PC-9 (cell line): ENCODE measurements at regions of chr7 and their contacts with region 1.

Region 1: GRCh38 chr7:41705109-41705901 is 2.4 kb upstream of the INHBA start:
- DNase-seq: peak; percentile 80 to 96
- H3K4me3 ChIP-seq: peak overlapping the region; percentile 54; the same call in 1 of the 2 replicates
- H3K27ac ChIP-seq: peak overlapping the region; percentile 53; the same call in 1 of the 2 replicates
- H3K4me1 ChIP-seq: peaks cover 43% of the 10 kb centered on the region
- H3K27me3 ChIP-seq: no peaks in the 10 kb centered on the region
- CTCF ChIP-seq: peak; percentile 97

Region 2: GRCh38 chr7:40232242-40232893 is 1472.9 kb before region 1 on chr7:
- CTCF ChIA-PET with region 1: interaction called, 5 read pairs
- POLR2A ChIA-PET with region 1: no interaction called
- intact Hi-C with region 1: loop called (anchors 10 kb)
- DNase-seq: peak; percentile 28 to 48
- H3K4me3 ChIP-seq: no peak overlapping the region
- H3K27ac ChIP-seq: no peak overlapping the region
- H3K4me1 ChIP-seq: no peaks in the 10 kb centered on the region
- H3K27me3 ChIP-seq: no peaks in the 10 kb centered on the region
- CTCF ChIP-seq: peak; percentile 84

Region 3: DNA sequence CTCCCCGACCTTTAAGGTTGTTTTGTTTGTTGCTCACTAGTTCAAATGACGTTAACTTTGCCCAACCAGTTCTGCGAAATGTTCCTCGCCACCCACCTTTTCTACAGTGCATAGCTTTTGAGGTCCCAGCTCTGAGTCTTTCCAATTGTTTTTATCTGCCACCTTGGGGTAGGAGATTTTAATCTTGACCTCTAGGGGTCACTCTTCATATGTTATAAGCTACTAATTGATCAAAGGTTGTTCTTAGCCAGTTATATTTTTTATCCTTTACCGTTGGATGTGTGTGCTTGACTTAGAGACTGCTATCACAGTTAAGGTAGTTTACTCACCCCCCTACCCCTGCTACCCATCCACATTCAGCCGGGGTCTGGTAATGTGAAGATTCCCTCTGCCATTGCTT is 1198.1 kb before region 1 on chr7:
- CTCF ChIA-PET with region 1: interaction called, 11 read pairs
- POLR2A ChIA-PET with region 1: no interaction called
- intact Hi-C with region 1: no loop called
- DNase-seq: no peak
- H3K4me3 ChIP-seq: no peak overlapping the region
- H3K27ac ChIP-seq: no peak overlapping the region
- H3K4me1 ChIP-seq: no peaks in the 10 kb centered on the region
- H3K27me3 ChIP-seq: no peaks in the 10 kb centered on the region
- CTCF ChIP-seq: peak; percentile 42; the same call in 1 of the 2 replicates

Region 4: GRCh38 chr7:40899651-40900507 is 805.4 kb before region 1 on chr7:
- CTCF ChIA-PET with region 1: interaction called, 4 read pairs
- POLR2A ChIA-PET with region 1: no interaction called
- intact Hi-C with region 1: loop called (anchors 1 kb)
- DNase-seq: peak; percentile 48 to 89
- H3K4me3 ChIP-seq: peak overlapping the region; percentile 51
- H3K27ac ChIP-seq: peak overlapping the region; percentile 94
- H3K4me1 ChIP-seq: peaks cover 25% of the 10 kb centered on the region
- H3K27me3 ChIP-seq: no peaks in the 10 kb centered on the region
- CTCF ChIP-seq: no peak

Region 5: DNA sequence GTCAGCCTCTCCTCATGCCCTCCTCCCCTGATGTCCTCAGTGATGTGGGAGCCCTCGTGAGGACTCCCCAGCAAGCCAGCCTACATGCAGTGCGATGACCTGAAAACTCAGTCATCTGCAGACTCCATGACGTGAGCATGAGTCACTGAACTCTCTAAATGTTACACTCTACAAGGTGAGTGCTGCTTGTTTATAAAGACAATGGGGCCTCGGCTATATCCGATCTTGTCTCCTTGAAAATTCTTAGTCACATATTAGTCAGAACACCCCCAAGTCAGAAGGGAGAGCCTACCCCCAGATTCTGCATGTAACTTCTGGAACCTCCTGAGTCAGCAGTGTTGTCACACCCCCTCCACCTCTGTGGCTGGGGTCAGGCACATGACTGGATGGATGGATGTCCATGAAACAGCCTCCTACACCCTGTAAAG is 676.2 kb before region 1 on chr7:
- CTCF ChIA-PET with region 1: no interaction called
- POLR2A ChIA-PET with region 1: interaction called, 4 read pairs
- intact Hi-C with region 1: loop called (anchors 1 kb)
- DNase-seq: peak; percentile 74 to 84
- H3K4me3 ChIP-seq: no peak overlapping the region
- H3K27ac ChIP-seq: peak overlapping the region; percentile 39
- H3K4me1 ChIP-seq: peaks cover 22% of the 10 kb centered on the region
- H3K27me3 ChIP-seq: no peaks in the 10 kb centered on the region
- CTCF ChIP-seq: no peak

Region 6: DNA sequence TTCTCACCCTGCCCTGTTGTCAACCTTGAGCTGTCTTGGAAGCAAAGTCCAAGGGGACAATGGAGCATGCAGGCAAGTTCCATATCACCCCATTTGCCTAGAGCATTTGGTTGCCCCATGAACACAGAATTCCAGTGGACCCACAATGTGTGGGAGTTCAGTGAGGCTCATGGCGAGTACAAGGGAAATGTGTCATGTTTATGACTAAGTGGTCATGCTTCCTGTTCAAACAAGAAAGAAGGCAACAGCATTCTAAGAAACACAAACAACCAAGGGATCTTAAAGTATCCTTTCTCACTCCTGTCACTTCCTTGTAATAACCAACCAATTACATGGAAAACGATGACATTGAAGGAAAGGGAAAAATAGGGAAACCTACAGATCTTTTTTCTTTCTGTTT is 515.4 kb before region 1 on chr7:
- CTCF ChIA-PET with region 1: no interaction called
- POLR2A ChIA-PET with region 1: no interaction called
- intact Hi-C with region 1: loop called (anchors 2 kb)
- DNase-seq: peak; percentile 61 to 99
- H3K4me3 ChIP-seq: no peak overlapping the region
- H3K27ac ChIP-seq: peak overlapping the region; percentile 93
- H3K4me1 ChIP-seq: peaks cover 46% of the 10 kb centered on the region
- H3K27me3 ChIP-seq: no peaks in the 10 kb centered on the region
- CTCF ChIP-seq: no peak

Region 7: GRCh38 chr7:41403291-41403690 is 302.0 kb before region 1 on chr7:
- CTCF ChIA-PET with region 1: no interaction called
- POLR2A ChIA-PET with region 1: no interaction called
- intact Hi-C with region 1: loop called (anchors 5 kb)
- DNase-seq: peak in 1 of 2 experiments; percentile 72
- H3K4me3 ChIP-seq: no peak overlapping the region
- H3K27ac ChIP-seq: peak overlapping the region; percentile 43
- H3K4me1 ChIP-seq: peaks cover 29% of the 10 kb centered on the region
- H3K27me3 ChIP-seq: no peaks in the 10 kb centered on the region
- CTCF ChIP-seq: no peak

Region 8: GRCh38 chr7:41451826-41452225 is 253.5 kb before region 1 on chr7:
- CTCF ChIA-PET with region 1: no interaction called
- POLR2A ChIA-PET with region 1: no interaction called
- intact Hi-C with region 1: no loop called
- DNase-seq: no peak
- H3K4me3 ChIP-seq: no peak overlapping the region
- H3K27ac ChIP-seq: no peak overlapping the region
- H3K4me1 ChIP-seq: peaks cover 16% of the 10 kb centered on the region
- H3K27me3 ChIP-seq: no peaks in the 10 kb centered on the region
- CTCF ChIP-seq: no peak